GM12878 (cell line): ENCODE measurements at regions of chr7 and their contacts with region 1.

Region 1: GRCh38 chr7:100132697-100133151 is 6.0 kb downstream of the MBLAC1 start:
- DNase-seq: no peak
- ATAC-seq: peak; percentile 87
- H3K4me3 ChIP-seq: no peak overlapping the region
- H3K27ac ChIP-seq: no peak overlapping the region
- H3K4me1 ChIP-seq: peaks cover 11% of the 10 kb centered on the region
- H3K27me3 ChIP-seq: no peaks in the 10 kb centered on the region
- CTCF ChIP-seq: peak; percentile 96 to 97 (median 97); a peak in 5 of 6 replicates
- EP300 ChIP-seq: no peak
- POLR2A ChIP-seq: no peak
- RAD21 ChIP-seq: peak; percentile 96

Region 2: DNA sequence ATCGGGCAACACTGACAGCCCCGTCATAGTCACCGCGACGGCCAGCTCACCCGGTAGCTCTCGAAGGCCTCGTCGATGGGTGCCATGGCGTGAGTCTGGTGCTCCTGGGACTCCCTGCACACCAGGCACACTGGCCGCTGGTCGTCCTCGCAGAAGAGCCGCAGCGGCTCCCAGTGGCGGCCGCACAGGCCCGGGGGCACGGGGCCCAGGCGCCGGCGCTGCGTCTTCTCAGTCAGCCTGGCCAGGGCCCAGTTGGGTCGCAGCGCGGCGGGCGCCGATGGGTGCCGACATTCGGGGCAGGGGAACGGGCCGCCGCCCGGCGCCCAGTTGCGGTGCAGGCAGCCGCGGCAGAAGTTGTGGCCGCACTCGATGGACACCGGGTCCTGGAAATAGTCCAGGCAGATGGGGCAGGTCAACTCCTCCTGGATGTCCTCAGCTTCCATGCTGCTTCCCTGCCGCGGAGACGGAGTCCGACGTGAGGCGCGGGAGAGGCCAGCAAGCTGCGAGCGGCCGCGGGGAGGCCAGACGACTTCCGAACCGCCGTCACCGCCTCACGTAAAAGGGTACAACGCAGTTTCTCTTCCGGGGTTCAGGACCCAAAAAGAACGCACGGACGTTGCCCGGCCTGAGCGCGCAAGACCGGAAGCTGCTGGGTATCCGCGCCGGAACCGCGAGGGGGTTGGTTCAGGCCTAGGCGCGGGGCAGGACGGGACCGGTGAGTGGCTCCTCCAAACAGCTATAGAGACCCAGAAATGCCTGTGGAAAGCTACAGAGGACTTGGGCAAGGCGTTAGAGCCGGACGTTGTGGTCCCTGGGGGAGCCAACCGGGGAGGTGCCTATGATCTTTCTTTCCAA is 213.5 kb before region 1 on chr7 and contains the start of gene TRIM4:
- CTCF ChIA-PET with region 1: interaction called, 20 read pairs
- POLR2A ChIA-PET with region 1: interaction called, 8 read pairs
- RAD21 ChIA-PET with region 1: interaction called, 24 read pairs
- SMC1A ChIA-PET with region 1: interaction called, 8 read pairs
- in situ Hi-C with region 1: no loop called
- intact Hi-C with region 1: loop called (anchors 5 kb)
- DNase-seq: peak; percentile 77
- ATAC-seq: peak; percentile 99
- H3K4me3 ChIP-seq: peak within 1 kb of the TSS; percentile 81
- H3K27ac ChIP-seq: peak within 1 kb of the TSS; percentile 79
- H3K4me1 ChIP-seq: no peaks in the 10 kb centered on the region
- H3K27me3 ChIP-seq: no peaks in the 10 kb centered on the region
- CTCF ChIP-seq: peak; percentile 24 to 28 (median 26); a peak in 4 of 6 replicates
- EP300 ChIP-seq: no peak
- POLR2A ChIP-seq: peak; percentile 99
- RAD21 ChIP-seq: 0 out of 2 replicates have a peak, but pooled peaks have one; percentile 8
- polyA plus RNA-seq, gene TRIM4: 4.8 to 6.0 TPM

Region 3: GRCh38 chr7:100081535-100082102 is 51.1 kb before region 1 on chr7 and contains the start of gene ZNF3:
- CTCF ChIA-PET with region 1: interaction called, 15 read pairs
- POLR2A ChIA-PET with region 1: interaction called, 3 read pairs
- RAD21 ChIA-PET with region 1: interaction called, 7 read pairs
- SMC1A ChIA-PET with region 1: interaction called, 5 read pairs
- in situ Hi-C with region 1: no loop called
- intact Hi-C with region 1: loop called (anchors 2 kb)
- DNase-seq: peak; percentile 97
- ATAC-seq: peak; percentile 90
- H3K4me3 ChIP-seq: peak within 1 kb of the TSS; percentile 88
- H3K27ac ChIP-seq: peak within 1 kb of the TSS; percentile 89
- H3K4me1 ChIP-seq: peaks cover 4% of the 10 kb centered on the region
- H3K27me3 ChIP-seq: no peaks in the 10 kb centered on the region
- CTCF ChIP-seq: peak; percentile 84 to 97 (median 89); a peak in 5 of 6 replicates
- EP300 ChIP-seq: peak in 1 of 2 experiments; percentile 60; a peak in 1 of 4 replicates
- POLR2A ChIP-seq: peak; percentile 96
- RAD21 ChIP-seq: peak; percentile 66
- polyA plus RNA-seq, gene ZNF3: 17.2 to 19.0 TPM

Region 4: DNA sequence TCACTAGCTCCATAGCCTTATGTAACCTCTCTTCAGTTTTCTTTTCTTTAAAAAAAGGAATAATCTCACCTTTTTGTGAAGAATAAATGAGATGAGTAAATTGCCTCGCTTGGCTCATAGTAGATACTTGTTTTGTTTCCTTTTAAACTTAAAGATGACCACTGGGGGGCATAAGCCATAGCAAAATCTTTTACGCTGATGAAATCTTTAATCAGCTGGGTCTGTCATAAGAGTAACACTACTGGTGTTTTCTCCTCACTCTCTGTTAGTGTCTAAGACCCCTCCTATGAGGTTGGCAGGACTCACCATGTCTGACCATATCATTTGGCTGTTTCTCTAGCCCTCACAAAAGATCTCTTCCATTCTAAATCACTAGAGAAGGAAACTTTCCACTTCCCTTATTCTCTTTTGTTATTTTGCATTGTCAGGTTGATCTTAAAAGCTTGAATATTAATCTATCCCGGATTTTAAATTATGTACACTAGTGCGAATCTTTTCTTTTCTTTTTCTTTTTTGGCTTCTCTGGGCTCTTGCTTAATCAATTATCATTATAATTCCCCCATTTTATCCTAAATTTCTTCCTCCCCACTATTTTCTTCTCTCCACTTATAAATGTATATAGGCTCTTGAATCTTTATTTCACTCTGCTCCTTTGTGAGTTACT is 57.5 kb after region 1 on chr7:
- CTCF ChIA-PET with region 1: interaction called, 37 read pairs
- POLR2A ChIA-PET with region 1: no interaction called
- RAD21 ChIA-PET with region 1: interaction called, 11 read pairs
- SMC1A ChIA-PET with region 1: interaction called, 8 read pairs
- in situ Hi-C with region 1: no loop called
- intact Hi-C with region 1: no loop called
- DNase-seq: no peak
- ATAC-seq: peak; percentile 83
- H3K4me3 ChIP-seq: no peak overlapping the region
- H3K27ac ChIP-seq: no peak overlapping the region
- H3K4me1 ChIP-seq: peaks cover 29% of the 10 kb centered on the region
- H3K27me3 ChIP-seq: no peaks in the 10 kb centered on the region
- CTCF ChIP-seq: peak; percentile 42 to 55 (median 44); a peak in 5 of 6 replicates
- EP300 ChIP-seq: no peak
- POLR2A ChIP-seq: no peak
- RAD21 ChIP-seq: peak; percentile 71

Region 5: DNA sequence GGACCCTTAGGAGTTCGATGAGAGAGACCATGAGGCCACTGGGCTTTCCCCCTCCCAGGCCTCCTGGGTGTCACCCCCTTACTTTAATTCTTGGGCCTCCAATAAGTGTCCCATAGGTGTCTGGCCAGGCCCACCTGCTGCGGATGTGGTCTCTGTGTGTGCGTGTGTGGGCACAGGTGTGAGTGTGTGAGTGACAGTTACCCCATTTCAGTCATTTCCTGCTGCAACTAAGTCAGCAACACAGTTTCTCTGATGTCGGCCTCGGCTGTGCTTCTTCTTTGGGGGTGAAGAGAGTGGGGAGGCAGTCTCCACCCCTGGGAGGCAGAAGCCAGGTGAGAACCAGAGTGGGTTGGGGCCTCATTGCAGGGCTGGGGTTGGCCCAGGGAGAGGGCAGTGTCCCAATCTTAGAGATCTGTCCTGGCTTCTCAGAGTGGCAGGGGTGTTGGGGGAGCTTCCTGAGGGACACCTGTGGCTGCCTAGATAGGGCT is 88.6 kb after region 1 on chr7:
- CTCF ChIA-PET with region 1: interaction called, 107 read pairs
- POLR2A ChIA-PET with region 1: interaction called, 7 read pairs
- RAD21 ChIA-PET with region 1: interaction called, 49 read pairs
- SMC1A ChIA-PET with region 1: interaction called, 41 read pairs
- in situ Hi-C with region 1: no loop called
- intact Hi-C with region 1: no loop called
- DNase-seq: peak; percentile 82
- ATAC-seq: peak; percentile 60
- H3K4me3 ChIP-seq: peak overlapping the region; percentile 63
- H3K27ac ChIP-seq: peak overlapping the region; percentile 99
- H3K4me1 ChIP-seq: peaks cover 44% of the 10 kb centered on the region
- H3K27me3 ChIP-seq: no peaks in the 10 kb centered on the region
- CTCF ChIP-seq: no peak
- EP300 ChIP-seq: peak; percentile 91 to 94
- POLR2A ChIP-seq: peak; percentile 84
- RAD21 ChIP-seq: no peak